Calu3 (cell line): ENCODE measurements at regions of chr18 and their contacts with region 1.

Region 1: DNA sequence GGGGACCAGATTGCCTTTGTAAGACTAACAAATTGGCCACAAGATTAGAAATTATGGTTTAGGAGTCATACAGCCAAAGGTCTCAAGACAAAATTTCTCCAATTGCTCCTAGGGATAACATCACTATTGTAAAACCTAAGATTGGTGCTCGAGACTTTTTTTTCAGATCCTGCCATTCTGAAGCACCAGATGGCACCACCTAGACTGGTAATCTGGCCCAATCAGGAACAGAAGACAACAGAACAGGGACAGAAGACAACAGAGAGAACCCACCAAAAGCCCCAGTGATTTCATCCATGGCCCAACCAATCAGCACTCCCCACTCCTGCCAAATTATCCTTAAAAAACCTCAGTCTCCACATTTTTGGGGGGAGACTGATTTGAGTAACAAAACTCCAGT is 66.8 kb downstream of the LINC00305 start:
- DNase-seq: no peak
- H3K4me3 Mint-ChIP-seq: no peak overlapping the region
- H3K27ac Mint-ChIP-seq: no peak overlapping the region
- H3K4me1 Mint-ChIP-seq: no peaks in the 10 kb centered on the region
- H3K27me3 Mint-ChIP-seq: no peaks in the 10 kb centered on the region
- CTCF ChIP-seq: no peak

Region 2: DNA sequence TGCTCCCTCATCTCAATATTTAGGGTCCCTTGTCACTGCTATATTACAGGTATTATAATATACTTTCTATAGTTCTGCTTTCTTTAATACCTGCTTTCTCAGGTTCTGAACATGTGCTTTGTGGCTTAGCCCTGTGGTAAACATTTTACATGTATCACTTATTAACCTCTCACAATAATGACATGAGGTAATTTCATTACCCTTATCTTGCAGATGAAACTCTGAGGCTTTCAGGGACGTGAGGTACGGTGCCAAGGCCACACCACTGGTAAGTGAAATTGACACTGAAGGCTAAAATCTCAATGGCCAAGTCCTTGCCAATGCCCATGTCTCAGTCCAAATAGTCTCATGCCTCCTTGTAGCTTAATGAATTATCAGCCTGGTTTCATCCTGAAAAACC is 45.1 kb after region 1 on chr18:
- CTCF ChIA-PET with region 1: no interaction called
- intact Hi-C with region 1: loop called (anchors 1 kb)
- DNase-seq: no peak
- H3K4me3 Mint-ChIP-seq: no peak overlapping the region
- H3K27ac Mint-ChIP-seq: no peak overlapping the region
- H3K4me1 Mint-ChIP-seq: no peaks in the 10 kb centered on the region
- H3K27me3 Mint-ChIP-seq: no peaks in the 10 kb centered on the region
- CTCF ChIP-seq: no peak